ENCODE measurements at regions of chr19 and their contacts with region 1.

Region 1: DNA sequence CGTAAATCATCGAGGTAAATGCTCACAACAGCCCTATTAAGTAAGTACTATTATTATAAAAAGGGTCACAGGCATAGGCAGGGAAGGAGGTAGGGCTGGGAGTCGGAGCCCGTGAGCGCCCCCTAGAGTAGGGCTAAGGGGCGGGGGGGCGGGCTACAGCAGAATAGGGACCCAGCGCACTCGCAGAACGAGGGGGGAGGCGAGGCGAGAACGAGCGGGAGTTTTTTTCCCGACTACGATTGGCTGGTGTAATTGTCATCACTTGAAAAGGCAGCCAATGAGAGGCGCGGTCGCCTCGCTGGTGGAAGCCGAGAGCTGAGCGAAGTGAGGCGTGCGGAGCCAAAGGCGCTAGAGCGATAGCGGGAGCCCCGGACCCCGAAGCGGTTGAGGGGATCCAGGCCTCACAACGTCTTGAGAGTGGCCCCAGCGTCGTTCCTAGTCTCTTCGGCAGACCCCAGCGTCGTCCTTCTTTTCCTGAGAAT is 24.2 kb downstream of the KEAP1 start:
- DNase-seq: peak; percentile 91 to 96 (median 94)
- ATAC-seq: peak; percentile 96
- H3K4me3 ChIP-seq: no peak overlapping the region
- H3K27ac ChIP-seq: no peak overlapping the region
- H3K4me1 ChIP-seq: peaks cover 14 to 26% of the 10 kb centered on the region in 2 experiments; a peak in 4 of 5 replicates
- H3K27me3 ChIP-seq: no peaks in the 10 kb centered on the region
- CTCF ChIP-seq: peak; percentile 61 to 78 (median 62)
- EP300 ChIP-seq: no peak
- POLR2A ChIP-seq: 0 out of 2 replicates have a peak, but pooled peaks have one; percentile 44
- RAD21 ChIP-seq: no peak

Region 2: DNA sequence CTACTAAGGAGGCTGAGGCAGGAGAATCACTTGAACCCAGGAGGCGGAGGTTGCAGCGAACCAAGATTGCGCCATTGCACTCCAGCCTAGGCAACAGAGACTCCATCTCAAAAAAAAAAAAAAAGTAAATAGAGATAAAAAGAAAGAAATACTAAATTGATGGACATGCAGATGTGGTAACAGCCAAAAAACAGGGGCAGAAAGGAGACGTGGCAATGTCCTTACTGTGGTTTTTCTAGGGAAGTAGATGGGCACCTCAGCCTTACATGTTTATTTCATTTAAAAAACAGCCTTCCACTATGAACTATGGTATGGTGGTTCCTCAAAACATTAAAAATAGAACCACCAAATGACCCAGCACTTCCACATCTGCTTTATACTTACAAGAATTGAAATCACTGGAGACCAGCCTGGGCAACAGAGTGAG is 352.7 kb before region 1 on chr19:
- CTCF ChIA-PET with region 1: no interaction called
- POLR2A ChIA-PET with region 1: no interaction called
- in situ Hi-C with region 1: no loop called
- intact Hi-C with region 1: no loop called
- DNase-seq: no peak
- ATAC-seq: no peak
- H3K4me3 ChIP-seq: no peak overlapping the region
- H3K27ac ChIP-seq: no peak overlapping the region
- H3K4me1 ChIP-seq: no peaks in the 10 kb centered on the region; a peak in 1 of 5 replicates
- H3K27me3 ChIP-seq: no peaks in the 10 kb centered on the region
- CTCF ChIP-seq: no peak
- EP300 ChIP-seq: no peak
- POLR2A ChIP-seq: no peak
- RAD21 ChIP-seq: no peak

Region 3: DNA sequence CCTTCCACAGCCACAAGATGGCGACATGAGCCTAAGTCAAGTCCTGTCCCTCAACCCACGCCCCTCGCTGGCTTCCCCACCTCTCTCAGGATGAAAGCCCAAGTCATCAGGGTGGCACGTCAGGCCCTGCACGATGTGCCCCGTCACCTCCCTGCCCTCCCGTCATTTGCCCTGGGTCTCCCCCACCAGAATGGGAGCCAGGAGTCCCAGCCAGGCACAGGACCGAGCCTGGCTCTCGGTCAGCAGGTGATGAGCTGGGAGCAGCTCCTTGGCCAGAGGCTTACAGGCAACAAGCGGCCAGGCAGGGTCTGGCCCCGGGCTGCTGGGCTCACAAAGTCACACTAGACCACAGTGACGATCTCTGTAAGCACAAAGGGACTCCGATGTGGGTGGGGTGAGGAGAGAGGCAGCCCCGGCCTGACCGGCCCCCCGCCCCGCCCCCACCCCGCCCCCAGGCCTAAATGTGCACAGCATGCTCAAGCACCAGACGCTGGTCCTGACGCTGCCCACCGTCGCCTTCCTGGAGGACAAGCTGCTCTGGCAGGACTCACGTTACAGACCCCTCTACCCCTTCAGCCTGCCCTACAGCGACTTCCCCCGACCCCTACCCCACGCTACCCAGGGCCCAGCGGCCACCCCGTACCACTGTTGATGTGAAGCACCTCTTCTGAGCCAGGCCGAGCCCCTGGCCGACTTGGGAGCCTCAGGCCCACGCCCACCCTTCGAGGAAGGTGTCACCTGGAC is 219.6 kb before region 1 on chr19:
- CTCF ChIA-PET with region 1: no interaction called
- POLR2A ChIA-PET with region 1: no interaction called
- in situ Hi-C with region 1: no loop called
- intact Hi-C with region 1: no loop called
- DNase-seq: peak; percentile 60 to 94 (median 67)
- ATAC-seq: peak; percentile 90
- H3K4me3 ChIP-seq: no peak overlapping the region
- H3K27ac ChIP-seq: no peak overlapping the region
- H3K4me1 ChIP-seq: peaks cover 5 to 34% of the 10 kb centered on the region in 2 experiments; a peak in 3 of 5 replicates
- H3K27me3 ChIP-seq: no peaks in the 10 kb centered on the region
- CTCF ChIP-seq: peak; percentile 78 to 87 (median 85)
- EP300 ChIP-seq: no peak
- POLR2A ChIP-seq: peak; percentile 40; the same call in 1 of the 2 replicates
- RAD21 ChIP-seq: peak; percentile 50 to 63

Region 4: DNA sequence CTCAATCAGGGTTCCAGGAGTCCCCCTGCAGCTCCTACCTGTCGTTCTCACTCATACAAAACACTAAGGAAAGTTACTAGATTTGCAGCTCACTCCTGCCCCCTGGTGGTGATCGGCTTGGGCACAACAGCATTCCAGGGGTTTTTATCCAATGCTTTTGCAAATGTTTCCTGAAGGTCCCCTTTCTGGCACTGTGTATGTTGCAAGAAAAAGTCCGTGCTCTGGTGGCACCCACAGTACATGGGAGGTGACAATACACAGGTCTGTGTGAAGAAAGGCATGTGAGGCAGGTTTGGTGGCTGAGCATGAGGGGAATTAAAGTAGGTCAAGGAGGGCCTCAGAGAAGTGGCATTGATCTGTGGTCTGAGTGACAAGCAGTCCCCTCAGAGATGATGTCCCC is 90.0 kb before region 1 on chr19:
- CTCF ChIA-PET with region 1: no interaction called
- POLR2A ChIA-PET with region 1: no interaction called
- in situ Hi-C with region 1: no loop called
- intact Hi-C with region 1: no loop called
- DNase-seq: peak; percentile 57 to 91 (median 68)
- ATAC-seq: peak; percentile 84
- H3K4me3 ChIP-seq: no peak overlapping the region
- H3K27ac ChIP-seq: no peak overlapping the region
- H3K4me1 ChIP-seq: peaks cover 0 to 6% of the 10 kb centered on the region in 2 experiments; a peak in 2 of 5 replicates
- H3K27me3 ChIP-seq: no peaks in the 10 kb centered on the region
- CTCF ChIP-seq: peak; percentile 92 to 95 (median 94)
- EP300 ChIP-seq: no peak
- POLR2A ChIP-seq: peak; percentile 56
- RAD21 ChIP-seq: peak; percentile 92 to 96

Region 5: DNA sequence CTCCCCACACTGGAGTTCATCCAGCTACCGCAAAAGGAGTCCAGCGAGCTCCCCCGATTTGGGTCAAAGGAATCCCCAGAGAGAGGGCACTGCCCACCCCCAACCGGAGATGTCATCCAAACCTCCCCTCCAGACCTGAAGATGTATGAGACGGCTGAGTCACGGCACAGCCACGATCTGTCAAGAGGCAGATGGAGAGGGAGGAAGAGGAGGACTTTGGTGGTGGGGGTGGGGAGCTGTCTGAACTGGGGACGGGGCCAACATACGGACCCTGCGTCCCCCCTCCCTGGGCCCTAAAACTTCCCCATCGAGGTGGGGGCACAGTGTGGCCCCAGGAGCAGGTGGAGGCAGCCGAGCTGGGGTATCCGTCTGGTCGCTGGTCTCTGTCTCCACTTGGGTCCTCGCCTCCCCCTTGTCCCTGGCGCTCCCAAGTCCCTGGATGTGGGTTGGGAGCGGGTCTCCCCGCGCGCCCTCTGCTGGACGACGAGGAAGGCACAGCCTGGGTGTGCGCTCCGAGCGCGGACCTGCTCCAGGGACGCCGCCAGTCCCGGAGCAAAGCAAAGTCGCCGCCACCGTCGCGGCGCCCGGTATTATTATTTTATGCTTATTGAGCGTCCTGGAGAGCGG is 54.8 kb before region 1 on chr19:
- CTCF ChIA-PET with region 1: no interaction called
- POLR2A ChIA-PET with region 1: interaction called, 3 read pairs
- in situ Hi-C with region 1: no loop called
- intact Hi-C with region 1: loop called (anchors 5 kb)
- DNase-seq: peak; percentile 76 to 92 (median 82)
- ATAC-seq: peak; percentile 82
- H3K4me3 ChIP-seq: peak overlapping the region; percentile 53
- H3K27ac ChIP-seq: peak overlapping the region; percentile 80
- H3K4me1 ChIP-seq: peaks cover 33 to 56% of the 10 kb centered on the region in 2 experiments; a peak in 4 of 5 replicates
- H3K27me3 ChIP-seq: no peaks in the 10 kb centered on the region
- CTCF ChIP-seq: peak; percentile 88 to 96 (median 93)
- EP300 ChIP-seq: no peak
- POLR2A ChIP-seq: no peak
- RAD21 ChIP-seq: peak; percentile 52 to 66

Region 6: DNA sequence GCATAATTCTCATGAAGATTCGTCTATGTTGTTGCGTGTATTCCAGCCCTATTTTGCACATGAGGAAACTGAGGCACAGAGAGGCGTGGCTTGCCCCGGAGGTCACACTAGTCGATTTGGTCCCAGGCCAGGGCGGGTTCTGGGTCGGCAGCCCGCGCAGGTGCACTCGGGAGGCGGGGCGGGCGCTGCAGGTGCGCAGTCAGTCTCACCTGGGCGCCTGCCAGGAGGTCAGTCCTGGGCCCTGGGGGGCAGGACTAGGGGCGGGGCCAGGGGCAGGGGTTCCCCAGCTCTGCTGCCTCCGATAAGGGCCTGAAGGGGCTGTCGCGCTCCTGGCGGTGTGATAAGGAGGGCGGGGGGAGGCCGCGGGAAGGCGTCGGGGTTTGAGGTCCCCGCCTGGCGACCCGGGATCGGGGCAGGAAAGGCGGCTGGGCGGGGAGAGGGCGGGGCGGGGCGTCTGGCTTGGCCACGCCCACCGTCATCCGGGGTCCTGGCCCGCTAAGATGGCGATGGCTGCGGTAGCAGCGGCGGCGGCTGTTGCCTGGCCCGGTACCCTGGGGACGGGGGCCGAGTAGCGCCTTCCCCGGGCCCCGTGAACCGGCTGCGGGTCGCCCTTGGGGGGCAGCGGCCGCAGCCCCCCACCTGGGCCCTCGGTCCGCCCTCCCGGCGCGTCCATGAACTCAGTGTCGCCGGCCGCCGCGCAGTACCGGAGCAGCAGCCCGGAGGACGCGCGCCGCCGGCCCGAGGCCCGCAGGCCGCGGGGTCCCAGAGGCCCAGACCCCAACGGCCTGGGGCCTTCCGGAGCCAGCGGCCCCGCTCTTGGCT is 64.7 kb after region 1 on chr19 and contains the start of gene ATG4D:
- CTCF ChIA-PET with region 1: no interaction called
- POLR2A ChIA-PET with region 1: no interaction called
- in situ Hi-C with region 1: no loop called
- intact Hi-C with region 1: no loop called
- DNase-seq: peak; percentile 97 to 99 (median 99)
- ATAC-seq: peak; percentile 87
- H3K4me3 ChIP-seq: peak within 1 kb of the TSS; percentile 97
- H3K27ac ChIP-seq: peak within 1 kb of the TSS; percentile 90
- H3K4me1 ChIP-seq: peaks cover 6 to 43% of the 10 kb centered on the region in 2 experiments; a peak in 4 of 5 replicates
- H3K27me3 ChIP-seq: no peaks in the 10 kb centered on the region
- CTCF ChIP-seq: no peak
- EP300 ChIP-seq: peak; percentile 81
- POLR2A ChIP-seq: peak; percentile 84
- RAD21 ChIP-seq: no peak
- polyA plus RNA-seq, gene ATG4D: 0.51 to 1.7 TPM